ENCODE measurements at regions of chr1 and their contacts with region 1.

Region 1: GRCh38 chr1:32876341-32877210 is 5.9 kb upstream of the FNDC5 start:
- DNase-seq: peak; percentile 80
- CTCF ChIP-seq: peak; percentile 89

Region 2: GRCh38 chr1:32485554-32486255 is 390.9 kb before region 1 on chr1:
- CTCF ChIA-PET with region 1: no interaction called
- POLR2A ChIA-PET with region 1: no interaction called
- DNase-seq: no peak
- CTCF ChIP-seq: no peak

Region 3: GRCh38 chr1:32716312-32717148 is 160.0 kb before region 1 on chr1:
- CTCF ChIA-PET with region 1: interaction called, 51 read pairs
- POLR2A ChIA-PET with region 1: no interaction called
- DNase-seq: peak; percentile 83
- CTCF ChIP-seq: no peak

Region 4: DNA sequence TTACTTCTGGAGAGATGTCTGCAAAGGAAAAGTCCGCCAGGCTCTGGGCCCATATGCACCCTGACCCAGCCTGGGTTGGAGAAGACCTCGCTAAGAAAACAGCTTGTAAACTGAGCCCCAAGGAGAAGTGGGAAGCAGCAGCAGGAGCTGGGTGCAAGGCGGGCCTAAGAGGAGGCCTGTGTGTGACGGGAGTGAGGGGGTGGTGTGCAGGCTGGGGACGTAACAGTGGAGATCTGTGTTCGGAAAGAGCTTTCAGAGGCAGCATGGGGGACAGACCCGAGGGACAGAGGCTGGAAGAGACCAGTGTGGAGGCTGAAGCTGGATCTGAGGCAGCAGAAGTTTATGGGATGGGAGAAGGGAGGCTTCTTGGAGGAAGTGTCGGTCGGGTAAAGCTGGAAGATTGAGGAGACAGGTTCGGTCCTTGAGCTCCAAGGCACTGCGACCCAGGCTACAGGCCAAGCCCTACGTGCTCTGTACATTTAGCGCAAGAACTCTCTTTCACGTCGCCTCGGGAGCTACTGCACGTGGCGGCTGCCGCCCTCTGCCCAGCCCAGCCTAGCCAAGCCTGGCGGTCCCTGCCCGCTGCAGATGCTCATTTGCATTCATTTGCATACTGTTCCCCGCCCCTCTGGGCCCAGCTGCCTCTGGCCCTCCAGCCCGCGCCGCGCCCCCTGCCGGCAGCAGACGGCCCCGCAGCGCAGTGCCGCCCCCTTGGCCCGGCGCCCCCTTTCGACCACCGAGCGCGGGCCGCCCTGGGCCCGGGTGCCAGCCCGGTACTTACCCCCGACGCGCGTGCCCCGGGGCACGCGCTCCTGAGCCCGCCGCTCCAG is 16.0 kb after region 1 on chr1:
- CTCF ChIA-PET with region 1: interaction called, 28 read pairs
- POLR2A ChIA-PET with region 1: no interaction called
- DNase-seq: peak; percentile 63
- CTCF ChIP-seq: peak; percentile 58

Region 5: GRCh38 chr1:32907439-32907838 is 30.9 kb after region 1 on chr1:
- CTCF ChIA-PET with region 1: no interaction called
- POLR2A ChIA-PET with region 1: no interaction called
- DNase-seq: no peak
- CTCF ChIP-seq: no peak

Region 6: DNA sequence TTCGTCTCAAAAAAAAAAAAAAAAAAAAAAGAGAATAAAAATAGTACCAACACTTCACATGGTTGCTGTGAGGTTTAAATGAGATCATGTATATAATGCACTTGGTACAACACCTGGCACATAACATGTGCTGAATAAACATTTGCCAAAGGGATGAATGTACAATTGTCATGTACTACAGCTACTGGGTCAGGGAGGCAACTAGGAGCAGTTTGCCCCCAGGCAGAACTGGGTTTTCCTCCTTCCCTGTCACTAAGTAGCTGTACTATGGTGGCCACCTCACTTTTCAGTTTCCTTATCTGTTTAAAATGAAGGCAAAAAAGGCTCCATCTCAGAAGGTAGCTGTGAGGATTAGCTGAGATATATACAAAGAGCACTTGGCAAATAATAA is 148.6 kb after region 1 on chr1:
- CTCF ChIA-PET with region 1: no interaction called
- POLR2A ChIA-PET with region 1: no interaction called
- DNase-seq: no peak
- CTCF ChIP-seq: no peak

Region 7: DNA sequence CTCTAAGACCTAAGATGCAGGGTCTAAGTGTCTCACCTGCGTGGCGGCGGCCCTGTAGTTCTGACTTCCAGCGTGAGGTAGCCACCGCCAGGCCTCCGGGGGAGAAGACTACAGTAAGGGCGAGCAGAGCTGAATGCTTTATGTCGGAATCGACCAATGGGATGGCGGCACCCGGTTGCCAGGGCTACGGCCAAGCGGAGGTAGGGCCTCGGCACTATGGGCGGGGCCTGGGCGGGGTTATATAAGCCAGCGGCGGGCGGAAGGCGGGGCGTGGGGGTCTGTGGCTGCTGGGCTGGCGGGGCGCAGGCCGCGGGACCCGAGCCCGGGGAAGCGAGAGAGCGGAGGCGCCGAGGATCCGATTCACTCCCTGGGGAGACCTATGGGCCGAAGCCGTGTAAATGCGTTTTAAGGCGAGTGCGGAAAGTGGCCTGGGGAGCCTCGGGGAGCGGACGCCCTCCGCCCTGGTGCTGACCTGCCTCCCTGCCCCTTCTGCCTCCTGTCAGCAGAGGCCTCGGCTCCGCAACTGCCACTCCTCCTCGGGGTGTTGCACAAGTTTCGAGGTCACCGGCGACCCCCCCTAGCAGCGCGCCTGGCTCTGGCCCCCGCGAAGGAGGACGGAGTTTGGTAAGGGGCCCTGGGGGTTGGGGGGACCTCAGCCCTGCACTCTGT is 204.4 kb after region 1 on chr1 and contains the start of gene AZIN2:
- CTCF ChIA-PET with region 1: interaction called, 55 read pairs
- POLR2A ChIA-PET with region 1: no interaction called
- DNase-seq: peak; percentile 96
- CTCF ChIP-seq: no peak

Measured in GM10248 (cell line).